ENCODE measurements at regions of chr17 and their contacts with region 1.

Region 1: GRCh38 chr17:45148183-45149036 is at the start of gene HEXIM1:
- DNase-seq: peak; percentile 99
- H3K4me3 Mint-ChIP-seq: peak within 1 kb of the TSS; percentile 99
- H3K27ac Mint-ChIP-seq: peak within 1 kb of the TSS; percentile 99
- H3K4me1 Mint-ChIP-seq: peaks cover 31% of the 10 kb centered on the region
- H3K27me3 Mint-ChIP-seq: no peaks in the 10 kb centered on the region
- total RNA-seq, gene HEXIM1: 46.4 and 48.1 TPM in 2 replicates

Region 2: DNA sequence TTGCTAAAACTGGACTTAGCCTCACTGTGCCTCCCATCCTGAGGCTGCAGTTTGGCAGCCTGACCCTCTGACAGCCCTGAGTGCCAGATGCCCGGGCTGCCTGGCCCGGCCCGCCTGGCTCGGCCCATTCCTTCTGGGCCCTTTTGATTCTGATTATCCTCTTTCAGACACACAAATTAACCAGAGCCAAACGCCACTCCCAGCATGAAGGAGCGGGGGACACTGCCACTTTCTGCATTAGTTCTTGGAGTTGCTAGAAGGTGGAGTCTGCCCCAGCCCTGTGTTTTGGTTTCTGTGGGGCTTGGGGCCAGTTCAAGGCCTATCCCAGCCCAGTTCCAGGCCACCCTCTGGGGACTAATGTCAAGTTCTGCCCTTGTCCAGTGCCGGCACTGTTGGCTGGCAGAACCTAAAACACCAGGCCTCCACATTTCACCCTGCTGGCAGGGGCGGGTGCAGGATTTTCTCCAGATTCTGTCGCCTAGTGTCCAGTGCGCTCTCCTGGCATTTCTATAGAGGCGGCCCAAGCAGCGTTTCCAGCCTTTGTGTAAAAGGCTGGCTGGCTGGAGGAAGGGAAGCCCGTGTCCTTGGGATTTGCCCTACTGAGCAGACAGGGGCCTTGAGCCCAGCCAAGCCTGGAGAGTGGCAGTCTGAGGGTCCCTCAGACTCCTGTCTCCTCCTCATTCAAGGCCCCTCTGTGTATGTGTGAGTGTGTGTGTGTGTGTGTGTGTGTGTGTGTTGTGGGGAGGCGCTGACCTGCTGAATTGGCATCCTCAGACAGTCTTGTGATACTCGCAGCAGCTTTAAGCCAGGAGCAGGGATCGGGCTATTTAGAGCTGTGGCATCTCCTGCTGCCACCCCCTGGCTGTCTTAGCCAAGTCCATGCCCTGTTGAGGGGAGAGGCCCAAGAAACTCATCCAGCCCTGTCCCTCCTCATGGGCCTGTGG is 37.5 kb before region 1 on chr17:
- intact Hi-C with region 1: no loop called
- DNase-seq: no peak
- H3K4me3 Mint-ChIP-seq: no peak overlapping the region
- H3K27ac Mint-ChIP-seq: no peak overlapping the region
- H3K4me1 Mint-ChIP-seq: no peaks in the 10 kb centered on the region
- H3K27me3 Mint-ChIP-seq: peaks cover 2% of the 10 kb centered on the region

Region 3: DNA sequence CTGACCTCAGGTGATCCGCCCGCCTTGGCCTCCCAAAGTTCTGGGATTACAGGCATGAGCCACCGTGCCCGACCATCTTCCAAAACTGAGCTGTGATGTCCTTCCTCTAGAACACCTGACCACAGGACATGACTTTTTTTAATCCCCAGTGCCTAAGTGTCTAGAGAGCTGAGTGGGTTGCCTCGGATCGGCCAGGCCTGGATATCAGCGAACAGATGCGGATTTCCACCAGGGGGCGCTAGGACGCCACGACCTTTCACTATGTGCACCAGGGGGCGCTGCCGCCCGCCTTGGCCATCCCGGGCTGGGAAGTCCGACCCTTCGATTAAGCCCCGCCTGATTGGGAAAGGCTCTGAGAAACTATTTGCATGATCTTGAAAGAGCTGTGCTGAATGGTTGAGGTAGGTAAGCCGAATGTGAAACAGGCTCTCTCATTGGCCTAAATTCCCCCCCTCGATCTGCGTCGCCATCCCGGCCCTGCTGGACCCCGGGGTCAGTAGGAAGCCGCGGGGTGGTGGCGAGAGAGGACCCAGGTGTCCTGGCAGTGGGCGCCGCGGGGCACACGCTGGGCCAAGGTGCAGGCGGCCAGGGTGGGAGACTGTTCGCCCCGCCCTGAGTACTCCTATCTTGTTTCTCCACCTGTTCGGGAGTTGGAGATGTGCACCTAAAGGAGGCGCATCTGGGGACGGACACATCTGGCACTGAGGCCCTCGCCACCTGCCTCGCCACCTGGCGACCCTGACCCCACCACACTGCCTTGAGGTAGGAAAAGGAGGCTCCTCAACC is 13.0 kb before region 1 on chr17 and contains the start of gene ACBD4:
- intact Hi-C with region 1: loop called (anchors 1 kb)
- DNase-seq: peak; percentile 94
- H3K4me3 Mint-ChIP-seq: peak within 1 kb of the TSS; percentile 85
- H3K27ac Mint-ChIP-seq: peak within 1 kb of the TSS; percentile 58
- H3K4me1 Mint-ChIP-seq: peaks cover 13% of the 10 kb centered on the region
- H3K27me3 Mint-ChIP-seq: peaks cover 6% of the 10 kb centered on the region
- total RNA-seq, gene ACBD4: 12.8 and 15.9 TPM in 2 replicates

Region 4: DNA sequence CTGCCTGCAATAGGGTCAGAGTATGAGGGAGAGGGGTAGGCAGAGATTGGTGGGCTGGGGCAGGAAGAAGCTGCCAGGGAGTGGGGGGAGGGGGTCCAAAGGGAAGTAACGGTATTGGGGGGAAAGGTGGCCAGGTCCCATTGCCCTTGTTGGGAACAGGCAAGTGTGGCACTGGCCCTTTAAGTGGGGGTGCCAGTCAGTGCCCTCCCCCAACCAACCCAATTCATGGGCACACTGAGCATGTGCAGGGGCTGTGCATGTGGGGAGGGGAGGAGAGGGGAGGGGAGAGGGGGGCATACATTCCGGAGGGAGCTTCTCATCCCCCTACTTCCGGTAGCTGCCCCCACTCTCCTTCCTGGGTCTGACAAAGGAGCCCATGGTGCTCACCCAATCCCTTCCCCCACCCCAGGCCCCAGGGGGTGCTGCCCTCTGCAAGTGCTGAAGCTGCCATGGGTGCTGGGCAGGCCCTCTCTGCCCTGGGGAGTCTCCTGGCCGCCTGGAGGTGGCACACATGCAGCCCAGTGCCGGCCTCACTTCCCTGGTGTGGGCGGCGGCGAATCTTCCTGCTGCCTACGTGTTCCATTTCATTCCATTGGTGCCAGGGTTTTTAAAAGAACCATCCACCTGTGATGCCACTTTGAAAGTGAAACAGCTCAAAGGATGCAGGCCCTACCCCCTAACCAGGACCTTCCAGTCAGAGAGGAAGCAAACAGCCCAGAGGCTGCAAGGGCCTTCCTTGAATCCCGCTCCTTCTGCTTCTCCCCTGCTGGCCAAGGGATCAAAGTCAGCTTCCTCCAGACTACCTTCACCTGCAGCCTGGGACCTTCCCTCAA is 24.3 kb after region 1 on chr17:
- intact Hi-C with region 1: loop called (anchors 2 kb)
- DNase-seq: peak; percentile 32
- H3K4me3 Mint-ChIP-seq: peak overlapping the region; percentile 72
- H3K27ac Mint-ChIP-seq: peak overlapping the region; percentile 87
- H3K4me1 Mint-ChIP-seq: peaks cover 16% of the 10 kb centered on the region
- H3K27me3 Mint-ChIP-seq: no peaks in the 10 kb centered on the region

Region 5: GRCh38 chr17:45197555-45198334 is 49.3 kb after region 1 on chr17:
- intact Hi-C with region 1: no loop called
- DNase-seq: peak; percentile 76
- H3K4me3 Mint-ChIP-seq: no peak overlapping the region
- H3K27ac Mint-ChIP-seq: no peak overlapping the region
- H3K4me1 Mint-ChIP-seq: peaks cover 4% of the 10 kb centered on the region
- H3K27me3 Mint-ChIP-seq: no peaks in the 10 kb centered on the region

Region 6: DNA sequence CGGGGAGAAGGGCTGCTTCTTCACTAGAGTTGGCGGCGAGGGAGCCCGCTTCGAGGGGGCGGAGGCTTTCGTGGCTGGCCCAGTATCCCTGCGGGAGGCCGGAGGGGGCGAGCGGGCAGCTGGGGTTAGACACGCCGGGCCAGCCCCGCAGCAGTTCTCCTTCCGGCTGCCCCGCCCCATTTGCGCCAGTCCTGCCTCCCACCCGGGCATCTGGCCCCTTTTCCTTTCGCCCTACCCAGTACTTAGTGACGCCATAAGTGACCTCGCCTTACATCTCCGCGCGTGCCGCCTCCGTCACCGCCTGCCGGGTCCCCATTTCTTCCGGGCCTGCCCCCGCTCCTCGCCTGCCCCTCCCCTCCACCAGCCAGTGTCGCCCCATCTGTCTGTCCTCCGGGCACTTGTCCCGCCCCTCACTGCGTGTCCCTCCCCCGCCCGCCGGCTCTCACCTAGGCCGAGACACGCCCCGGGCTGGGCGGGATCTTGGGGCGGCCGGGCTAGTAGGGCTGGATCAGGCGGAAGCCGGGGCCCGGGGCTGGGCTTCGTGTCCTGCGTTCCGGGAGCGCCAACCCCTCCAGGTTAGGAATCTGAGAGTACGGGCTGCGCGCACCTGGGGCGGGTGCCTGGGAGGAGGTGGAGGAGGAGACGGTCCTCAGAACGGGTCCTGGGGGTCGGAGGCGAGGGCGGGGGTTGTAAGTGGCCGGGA is 99.2 kb after region 1 on chr17:
- intact Hi-C with region 1: loop called (anchors 5 kb)
- DNase-seq: peak; percentile 95
- H3K4me3 Mint-ChIP-seq: peak overlapping the region; percentile 91
- H3K27ac Mint-ChIP-seq: peak overlapping the region; percentile 91
- H3K4me1 Mint-ChIP-seq: peaks cover 53% of the 10 kb centered on the region
- H3K27me3 Mint-ChIP-seq: no peaks in the 10 kb centered on the region